Lower leg skin (tissue), 4 donors: ENCODE measurements at regions of chr1 and their contacts with region 1.

Region 1: GRCh38 chr1:118151312-118151937 is 33.6 kb downstream of the SPAG17 start:
- DNase-seq: peak in 1 of 2 donors; percentile 48
- H3K4me3 ChIP-seq: no peak overlapping the region
- CTCF ChIP-seq: no peak
- POLR2A ChIP-seq: no peak

Region 2: GRCh38 chr1:118209625-118210024 is 58.2 kb after region 1 on chr1:
- intact Hi-C with region 1: no loop called
- DNase-seq: peak; percentile 74 to 88
- H3K4me3 ChIP-seq: no peak overlapping the region
- CTCF ChIP-seq: no peak
- POLR2A ChIP-seq: no peak

Region 3: DNA sequence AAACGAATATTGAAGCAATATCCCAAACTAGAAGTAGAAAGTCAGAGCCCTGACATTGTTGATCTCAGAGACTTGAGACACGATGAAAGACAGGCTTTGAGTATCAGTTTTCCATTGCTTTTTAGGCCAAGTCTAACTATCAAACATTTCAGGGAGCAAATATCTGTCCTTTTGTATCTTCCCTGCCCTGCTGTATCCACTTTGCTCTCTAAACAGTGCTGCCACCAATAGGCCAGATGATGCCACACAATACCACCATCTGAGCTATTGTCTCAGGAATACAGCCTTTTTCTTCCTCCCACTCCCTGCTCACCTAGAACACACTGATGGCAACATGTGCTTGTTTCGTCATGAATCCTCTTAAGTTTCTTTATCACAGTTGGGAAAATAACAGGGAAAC is 96.2 kb after region 1 on chr1:
- intact Hi-C with region 1: no loop called
- DNase-seq: no peak
- H3K4me3 ChIP-seq: no peak overlapping the region
- CTCF ChIP-seq: no peak
- POLR2A ChIP-seq: no peak

Region 4: DNA sequence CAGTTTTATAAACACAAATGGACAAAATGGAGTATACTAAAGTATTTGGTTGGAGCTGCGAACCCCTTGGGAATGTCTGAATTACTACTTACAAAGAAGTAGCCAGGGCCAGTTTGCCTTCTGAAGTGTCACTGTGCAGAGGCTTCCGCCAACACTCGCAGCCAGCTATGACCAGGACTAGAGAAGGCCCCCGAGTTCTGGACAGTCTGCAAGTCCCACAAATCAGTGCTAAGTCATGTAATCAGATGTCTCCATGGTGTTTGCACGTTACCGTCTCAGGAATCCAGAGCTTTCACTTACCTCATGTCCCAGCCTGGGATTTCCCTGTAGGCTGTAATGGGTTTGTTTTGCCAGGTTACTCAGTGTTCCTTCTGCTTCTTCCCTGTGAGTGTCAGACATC is 140.2 kb after region 1 on chr1:
- intact Hi-C with region 1: no loop called
- DNase-seq: peak in 1 of 2 donors; percentile 24
- H3K4me3 ChIP-seq: no peak overlapping the region
- CTCF ChIP-seq: no peak
- POLR2A ChIP-seq: no peak

Region 5: GRCh38 chr1:119008483-119009311 is 857.3 kb after region 1 on chr1:
- intact Hi-C with region 1: loop called (anchors 5 kb)
- DNase-seq: peak in 1 of 2 donors; percentile 88
- H3K4me3 ChIP-seq: no peak overlapping the region
- CTCF ChIP-seq: peak in 1 of 3 donors; percentile 37
- POLR2A ChIP-seq: no peak